Colonic mucosa (tissue), 4 donors: ENCODE measurements at regions of chrX and their contacts with region 1.

Region 1: GRCh38 chrX:132071260-132071659 is 48.2 kb downstream of the STK26 start:
- DNase-seq: no peak
- H3K4me3 ChIP-seq: no peak overlapping the region
- H3K27ac ChIP-seq: no peak overlapping the region
- H3K4me1 ChIP-seq: no peaks in the 10 kb centered on the region
- H3K27me3 ChIP-seq: no peaks in the 10 kb centered on the region
- CTCF ChIP-seq: no peak

Region 2: DNA sequence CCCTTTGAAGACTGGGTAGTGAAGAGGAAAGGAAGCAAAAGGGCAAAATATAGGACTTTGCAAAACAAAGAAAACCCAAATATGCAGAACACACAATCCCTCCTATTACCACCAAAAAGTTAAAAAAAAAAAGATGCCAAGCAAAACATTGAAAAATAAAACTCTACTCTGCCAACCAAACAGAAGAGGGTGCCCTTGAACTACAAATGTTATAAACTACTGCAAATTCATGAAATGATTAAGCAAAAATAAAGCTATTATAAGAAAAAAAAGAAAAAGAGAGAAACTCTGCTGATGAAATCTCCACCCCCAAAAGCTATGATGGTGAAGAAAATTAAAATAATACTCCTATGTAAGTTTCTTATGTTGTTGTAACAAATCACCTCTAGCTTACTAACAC is 216.7 kb before region 1 on chrX:
- intact Hi-C with region 1: loop called (anchors 10 kb)
- DNase-seq: no peak
- H3K4me3 ChIP-seq: no peak overlapping the region
- H3K27ac ChIP-seq: no peak overlapping the region
- H3K4me1 ChIP-seq: no peaks in the 10 kb centered on the region
- H3K27me3 ChIP-seq: peaks cover 19% of the 10 kb centered on the region
- CTCF ChIP-seq: no peak